K562 (cell line): ENCODE measurements at regions of chr10 and their contacts with region 1.

Region 1: GRCh38 chr10:16950656-16951601 is 133.7 kb upstream of the RSU1 start:
- DNase-seq: peak; percentile 20 to 72 (median 37)
- ATAC-seq: peak; percentile 86
- H3K4me3 ChIP-seq: no peak overlapping the region
- H3K27ac ChIP-seq: no peak overlapping the region
- H3K4me1 ChIP-seq: peaks cover 0 to 6% of the 10 kb centered on the region in 2 experiments; a peak in 1 of 5 replicates
- H3K27me3 ChIP-seq: no peaks in the 10 kb centered on the region
- CTCF ChIP-seq: no peak
- EP300 ChIP-seq: no peak
- POLR2A ChIP-seq: no peak
- RAD21 ChIP-seq: no peak

Region 2: DNA sequence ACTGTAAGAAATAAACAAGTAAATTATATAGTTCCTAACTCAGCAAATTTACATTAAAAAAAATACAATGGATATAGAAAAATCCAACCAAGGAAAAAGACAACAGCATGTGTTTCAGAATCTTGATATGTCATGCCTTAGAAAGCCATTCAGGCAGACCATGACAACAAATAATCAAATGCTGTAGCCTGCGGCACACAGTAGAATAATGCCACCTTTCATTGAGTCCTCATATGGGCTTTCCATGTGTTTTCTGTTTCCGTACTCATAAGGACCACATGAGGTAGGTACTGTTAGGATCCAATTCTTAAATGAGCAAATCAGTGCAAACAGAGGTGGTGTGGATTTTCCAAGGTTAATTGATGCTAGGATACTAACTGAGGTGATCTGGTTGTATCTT is 40.1 kb after region 1 on chr10:
- CTCF ChIA-PET with region 1: no interaction called
- POLR2A ChIA-PET with region 1: no interaction called
- in situ Hi-C with region 1: no loop called
- intact Hi-C with region 1: no loop called
- DNase-seq: no peak
- ATAC-seq: no peak
- H3K4me3 ChIP-seq: no peak overlapping the region
- H3K27ac ChIP-seq: no peak overlapping the region
- H3K4me1 ChIP-seq: peaks cover 0 to 10% of the 10 kb centered on the region in 2 experiments; a peak in 3 of 5 replicates
- H3K27me3 ChIP-seq: no peaks in the 10 kb centered on the region
- CTCF ChIP-seq: no peak
- EP300 ChIP-seq: no peak
- POLR2A ChIP-seq: no peak
- RAD21 ChIP-seq: no peak

Region 3: GRCh38 chr10:17001961-17002749 is 51.2 kb after region 1 on chr10:
- CTCF ChIA-PET with region 1: no interaction called
- POLR2A ChIA-PET with region 1: no interaction called
- in situ Hi-C with region 1: no loop called
- intact Hi-C with region 1: loop called (anchors 5 kb)
- DNase-seq: no peak
- ATAC-seq: no peak
- H3K4me3 ChIP-seq: no peak overlapping the region
- H3K27ac ChIP-seq: no peak overlapping the region
- H3K4me1 ChIP-seq: peaks cover 0 to 4% of the 10 kb centered on the region in 2 experiments; a peak in 2 of 5 replicates
- H3K27me3 ChIP-seq: 0 out of 5 replicates have a peak, but pooled peaks cover 0 to 5% of the 10 kb centered on the region in 2 experiments
- CTCF ChIP-seq: no peak
- EP300 ChIP-seq: no peak
- POLR2A ChIP-seq: no peak
- RAD21 ChIP-seq: no peak

Region 4: GRCh38 chr10:17062955-17063484 is 112.1 kb after region 1 on chr10:
- CTCF ChIA-PET with region 1: no interaction called
- POLR2A ChIA-PET with region 1: no interaction called
- in situ Hi-C with region 1: no loop called
- intact Hi-C with region 1: no loop called
- DNase-seq: no peak
- ATAC-seq: peak; percentile 49; the same call in 2 of the 3 replicates
- H3K4me3 ChIP-seq: no peak overlapping the region
- H3K27ac ChIP-seq: no peak overlapping the region
- H3K4me1 ChIP-seq: no peaks in the 10 kb centered on the region; a peak in 2 of 5 replicates
- H3K27me3 ChIP-seq: no peaks in the 10 kb centered on the region
- CTCF ChIP-seq: peak in 1 of 3 experiments; percentile 14; a peak in 1 of 6 replicates
- EP300 ChIP-seq: no peak
- POLR2A ChIP-seq: no peak
- RAD21 ChIP-seq: peak in 1 of 2 experiments; percentile 35; a peak in 1 of 4 replicates

Region 5: GRCh38 chr10:17109475-17110207 is 158.7 kb after region 1 on chr10:
- CTCF ChIA-PET with region 1: no interaction called
- POLR2A ChIA-PET with region 1: no interaction called
- in situ Hi-C with region 1: no loop called
- intact Hi-C with region 1: loop called (anchors 10 kb)
- DNase-seq: peak in 2 of 4 experiments; percentile 14 to 20
- ATAC-seq: no peak
- H3K4me3 ChIP-seq: no peak overlapping the region
- H3K27ac ChIP-seq: no peak overlapping the region
- H3K4me1 ChIP-seq: no peaks in the 10 kb centered on the region
- H3K27me3 ChIP-seq: no peaks in the 10 kb centered on the region
- CTCF ChIP-seq: no peak
- EP300 ChIP-seq: no peak
- POLR2A ChIP-seq: no peak
- RAD21 ChIP-seq: no peak

Region 6: GRCh38 chr10:17144757-17145156 is 193.8 kb after region 1 on chr10:
- CTCF ChIA-PET with region 1: no interaction called
- POLR2A ChIA-PET with region 1: no interaction called
- in situ Hi-C with region 1: no loop called
- intact Hi-C with region 1: loop called (anchors 10 kb)
- DNase-seq: no peak
- ATAC-seq: no peak
- H3K4me3 ChIP-seq: no peak overlapping the region
- H3K27ac ChIP-seq: no peak overlapping the region
- H3K4me1 ChIP-seq: 0 out of 5 replicates have a peak, but pooled peaks cover 0 to 3% of the 10 kb centered on the region in 2 experiments
- H3K27me3 ChIP-seq: no peaks in the 10 kb centered on the region
- CTCF ChIP-seq: no peak
- EP300 ChIP-seq: no peak
- POLR2A ChIP-seq: no peak
- RAD21 ChIP-seq: no peak